Activated CD8-positive, alpha-beta T cell treated with anti-CD3 and anti-CD28 coated beads for 36 hours (primary cell): ENCODE measurements at regions of chr2 and their contacts with region 1.

Region 1: GRCh38 chr2:134207564-134208209 is 46.2 kb upstream of the MGAT5 start:
- DNase-seq: peak; percentile 80
- ATAC-seq: peak; percentile 92
- H3K4me3 Mint-ChIP-seq: no peak overlapping the region
- H3K27ac Mint-ChIP-seq: no peak overlapping the region
- H3K4me1 Mint-ChIP-seq: peaks cover 6% of the 10 kb centered on the region
- H3K27me3 Mint-ChIP-seq: no peaks in the 10 kb centered on the region
- CTCF ChIP-seq: peak; percentile 64

Region 2: DNA sequence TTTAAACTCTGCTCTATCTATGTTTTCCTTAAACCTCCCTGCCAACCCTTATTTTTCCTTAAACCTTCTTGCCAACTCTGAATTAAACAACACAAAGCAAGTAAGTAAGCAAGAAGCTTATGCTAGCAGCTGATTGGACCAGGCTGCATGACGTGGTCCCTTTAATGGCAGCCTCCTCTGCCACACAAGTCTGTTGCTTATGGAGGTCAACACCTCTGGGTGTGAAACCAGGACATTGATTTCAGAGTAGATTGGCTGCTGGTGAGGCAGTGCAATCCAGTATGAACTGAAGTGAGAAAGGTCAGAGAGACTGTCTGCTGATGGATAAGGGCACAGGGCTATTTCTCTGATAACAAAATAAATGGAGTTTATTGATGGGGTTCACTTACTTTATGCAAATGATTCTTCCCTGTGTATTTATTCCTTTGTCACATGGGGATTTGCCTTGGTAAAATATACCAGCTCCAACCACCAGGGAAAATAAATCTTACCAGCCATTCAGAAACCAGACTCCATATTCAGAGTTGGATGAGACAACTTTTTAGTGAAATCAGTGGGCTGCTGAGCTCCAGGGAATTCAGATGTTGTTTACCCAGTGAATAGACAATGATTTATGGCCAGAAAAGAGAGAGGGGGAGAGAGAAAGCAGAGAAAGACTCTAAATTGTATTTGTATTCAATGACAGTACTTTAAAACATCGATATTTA is 527.2 kb before region 1 on chr2:
- CTCF ChIA-PET with region 1: no interaction called
- POLR2A ChIA-PET with region 1: no interaction called
- intact Hi-C with region 1: no loop called
- DNase-seq: no peak
- ATAC-seq: no peak
- H3K4me3 Mint-ChIP-seq: no peak overlapping the region
- H3K27ac Mint-ChIP-seq: no peak overlapping the region
- H3K4me1 Mint-ChIP-seq: no peaks in the 10 kb centered on the region
- H3K27me3 Mint-ChIP-seq: peaks cover 6% of the 10 kb centered on the region
- CTCF ChIP-seq: no peak

Region 3: DNA sequence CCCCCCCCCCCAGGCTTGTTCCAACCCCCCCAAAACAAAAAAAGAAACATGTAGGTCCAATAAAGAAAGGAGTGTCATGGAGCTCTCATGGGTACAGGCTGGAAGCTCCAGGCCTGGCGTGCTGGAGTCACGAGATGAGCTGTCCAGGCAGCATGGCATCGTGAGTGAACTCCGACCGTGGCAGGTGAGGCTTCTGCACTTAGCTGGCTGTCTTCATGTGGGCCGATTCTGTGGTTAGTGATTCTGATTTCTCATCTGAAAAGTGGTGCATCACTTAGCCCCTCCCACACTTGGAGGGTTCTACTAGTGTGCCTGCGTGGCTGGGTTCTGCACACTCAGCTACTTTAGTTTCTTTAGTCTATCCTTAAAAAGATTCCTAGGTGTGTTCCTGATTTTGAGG is 80.2 kb before region 1 on chr2:
- CTCF ChIA-PET with region 1: interaction called, 12 read pairs
- POLR2A ChIA-PET with region 1: interaction called, 4 read pairs
- intact Hi-C with region 1: no loop called
- DNase-seq: peak; percentile 86
- ATAC-seq: peak; percentile 93
- H3K4me3 Mint-ChIP-seq: peak overlapping the region; percentile 1
- H3K27ac Mint-ChIP-seq: no peak overlapping the region
- H3K4me1 Mint-ChIP-seq: peaks cover 77% of the 10 kb centered on the region
- H3K27me3 Mint-ChIP-seq: no peaks in the 10 kb centered on the region
- CTCF ChIP-seq: no peak

Region 4: GRCh38 chr2:134173338-134174016 is 34.2 kb before region 1 on chr2:
- CTCF ChIA-PET with region 1: interaction called, 13 read pairs
- POLR2A ChIA-PET with region 1: interaction called, 3 read pairs
- intact Hi-C with region 1: no loop called
- DNase-seq: no peak
- ATAC-seq: no peak
- H3K4me3 Mint-ChIP-seq: no peak overlapping the region
- H3K27ac Mint-ChIP-seq: no peak overlapping the region
- H3K4me1 Mint-ChIP-seq: peaks cover 61% of the 10 kb centered on the region
- H3K27me3 Mint-ChIP-seq: no peaks in the 10 kb centered on the region
- CTCF ChIP-seq: no peak

Region 5: DNA sequence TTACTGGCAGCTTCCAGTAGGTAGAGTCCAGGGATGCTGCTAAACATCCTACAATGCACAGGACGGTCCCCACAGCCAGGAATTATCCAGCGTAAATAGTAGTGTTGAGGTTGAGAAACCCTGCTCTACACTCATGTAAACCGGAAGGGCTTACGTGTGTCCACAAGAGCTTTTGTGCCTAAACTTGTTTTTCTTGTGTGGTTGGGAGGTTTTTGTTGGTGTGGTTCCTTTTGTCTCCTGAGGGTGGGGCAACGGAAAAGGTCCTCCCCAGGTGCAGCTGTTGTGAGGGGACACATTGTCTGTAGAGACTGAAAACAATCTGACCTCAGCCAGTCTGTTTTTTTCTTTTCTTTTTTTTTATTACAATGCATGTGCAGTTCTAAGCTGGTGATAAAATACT is 26.5 kb before region 1 on chr2:
- CTCF ChIA-PET with region 1: interaction called, 11 read pairs
- POLR2A ChIA-PET with region 1: interaction called, 3 read pairs
- intact Hi-C with region 1: no loop called
- DNase-seq: peak; percentile 50
- ATAC-seq: peak; percentile 84
- H3K4me3 Mint-ChIP-seq: no peak overlapping the region
- H3K27ac Mint-ChIP-seq: peak overlapping the region; percentile 64
- H3K4me1 Mint-ChIP-seq: peaks cover 76% of the 10 kb centered on the region
- H3K27me3 Mint-ChIP-seq: no peaks in the 10 kb centered on the region
- CTCF ChIP-seq: no peak

Region 6: DNA sequence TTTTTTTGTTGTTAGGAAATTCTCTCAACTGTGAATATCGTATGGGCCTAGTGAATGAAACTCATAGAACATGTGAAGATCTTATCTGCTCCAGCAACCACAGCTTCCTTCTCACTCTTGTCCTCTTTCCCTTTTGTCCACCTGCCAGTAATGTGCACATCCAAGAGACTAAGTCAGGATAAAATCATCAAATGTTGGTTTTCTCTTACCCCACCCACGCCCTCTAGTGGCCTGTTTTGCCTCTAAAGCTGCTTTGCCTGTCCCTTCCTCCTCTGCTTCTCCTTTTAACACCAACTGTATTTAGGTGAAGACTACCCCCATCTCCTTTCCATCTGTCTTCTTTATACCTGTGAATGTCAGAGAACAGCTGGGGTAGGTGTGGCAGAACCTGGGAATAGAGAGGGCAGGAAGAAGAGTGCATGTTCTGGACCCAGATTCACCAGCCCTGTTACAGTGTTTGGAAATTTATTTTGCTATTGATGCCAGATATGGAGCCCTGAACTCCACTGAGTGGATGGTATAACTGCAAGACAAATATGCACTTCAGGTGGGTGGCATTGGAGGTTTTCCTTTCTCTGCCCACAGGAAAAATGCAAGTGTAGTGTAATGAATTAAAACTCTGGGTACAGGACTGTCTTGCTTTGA is 37.8 kb after region 1 on chr2:
- CTCF ChIA-PET with region 1: interaction called, 14 read pairs
- POLR2A ChIA-PET with region 1: no interaction called
- intact Hi-C with region 1: no loop called
- DNase-seq: peak; percentile 90
- ATAC-seq: peak; percentile 40
- H3K4me3 Mint-ChIP-seq: no peak overlapping the region
- H3K27ac Mint-ChIP-seq: peak overlapping the region; percentile 13
- H3K4me1 Mint-ChIP-seq: peaks cover 79% of the 10 kb centered on the region
- H3K27me3 Mint-ChIP-seq: no peaks in the 10 kb centered on the region
- CTCF ChIP-seq: peak; percentile 88

Region 7: GRCh38 chr2:134258684-134259388 is 51.1 kb after region 1 on chr2:
- CTCF ChIA-PET with region 1: no interaction called
- POLR2A ChIA-PET with region 1: no interaction called
- intact Hi-C with region 1: no loop called
- DNase-seq: peak; percentile 75
- ATAC-seq: peak; percentile 94
- H3K4me3 Mint-ChIP-seq: no peak overlapping the region
- H3K27ac Mint-ChIP-seq: peak overlapping the region; percentile 76
- H3K4me1 Mint-ChIP-seq: peaks cover 84% of the 10 kb centered on the region
- H3K27me3 Mint-ChIP-seq: no peaks in the 10 kb centered on the region
- CTCF ChIP-seq: no peak

Region 8: DNA sequence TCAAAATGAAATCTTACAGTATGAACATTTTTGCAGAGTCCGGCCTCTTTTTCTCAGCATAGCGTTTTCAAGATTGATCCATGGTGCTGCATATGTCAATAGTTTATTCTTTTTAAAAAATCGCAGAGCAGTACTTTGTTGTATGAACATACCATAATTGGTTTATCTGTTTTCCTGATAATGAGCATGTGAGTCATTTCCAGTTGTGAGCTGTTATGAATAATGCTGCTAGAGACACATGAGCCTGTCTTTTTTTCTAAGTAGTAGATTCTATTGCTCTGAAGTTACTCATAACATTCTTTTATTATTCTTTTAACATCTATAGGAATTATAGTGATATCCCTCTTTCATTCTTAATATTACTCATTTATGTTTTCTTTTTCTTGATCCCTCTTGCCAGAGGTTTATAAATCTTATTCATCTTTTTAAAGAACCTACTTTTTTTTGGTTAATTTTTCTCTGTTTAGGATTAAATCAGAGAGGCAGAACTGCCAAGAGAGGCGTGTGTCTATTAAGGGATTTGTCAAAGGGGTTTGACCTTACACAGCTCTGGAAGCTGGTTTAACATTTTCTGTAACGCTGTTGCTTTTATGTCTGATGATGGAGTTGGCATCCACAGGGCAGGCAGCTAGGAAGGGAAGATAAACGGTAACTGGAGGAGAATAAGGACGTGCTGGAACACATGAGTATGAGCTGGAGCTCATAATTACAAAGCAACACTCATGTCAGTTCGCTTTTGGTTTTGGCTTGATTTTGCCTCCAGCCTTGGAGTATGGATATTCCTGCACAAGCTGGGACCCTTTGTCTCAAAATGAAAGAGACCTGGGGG is 93.6 kb after region 1 on chr2:
- CTCF ChIA-PET with region 1: no interaction called
- POLR2A ChIA-PET with region 1: no interaction called
- intact Hi-C with region 1: no loop called
- DNase-seq: no peak
- ATAC-seq: peak; percentile 83
- H3K4me3 Mint-ChIP-seq: no peak overlapping the region
- H3K27ac Mint-ChIP-seq: peak overlapping the region; percentile 72
- H3K4me1 Mint-ChIP-seq: peaks cover 70% of the 10 kb centered on the region
- H3K27me3 Mint-ChIP-seq: no peaks in the 10 kb centered on the region
- CTCF ChIP-seq: no peak